ENCODE measurements at regions of chr1 and their contacts with region 1.

Region 1: GRCh38 chr1:103220631-103221041 is 112.3 kb upstream of the COL11A1 start:
- DNase-seq: no peak
- ATAC-seq: no peak
- H3K4me3 ChIP-seq: no peak overlapping the region
- H3K27ac ChIP-seq: no peak overlapping the region
- H3K4me1 ChIP-seq: no peaks in the 10 kb centered on the region
- H3K27me3 ChIP-seq: no peaks in the 10 kb centered on the region
- CTCF ChIP-seq: no peak

Region 2: GRCh38 chr1:103162360-103162759 is 58.3 kb before region 1 on chr1:
- intact Hi-C with region 1: no loop called
- DNase-seq: no peak
- ATAC-seq: no peak
- H3K4me3 ChIP-seq: no peak overlapping the region
- H3K27ac ChIP-seq: no peak overlapping the region
- H3K4me1 ChIP-seq: no peaks in the 10 kb centered on the region
- H3K27me3 ChIP-seq: no peaks in the 10 kb centered on the region
- CTCF ChIP-seq: no peak

Region 3: GRCh38 chr1:103250441-103250861 is 29.8 kb after region 1 on chr1:
- intact Hi-C with region 1: loop called in 1 of 2 experiments (anchors 1 kb)
- DNase-seq: no peak
- ATAC-seq: no peak
- H3K4me3 ChIP-seq: no peak overlapping the region
- H3K27ac ChIP-seq: no peak overlapping the region
- H3K4me1 ChIP-seq: no peaks in the 10 kb centered on the region
- H3K27me3 ChIP-seq: no peaks in the 10 kb centered on the region
- CTCF ChIP-seq: no peak

Region 4: GRCh38 chr1:103327054-103327719 is 106.6 kb after region 1 on chr1:
- intact Hi-C with region 1: no loop called
- DNase-seq: peak in 1 of 2 donors; percentile 5
- ATAC-seq: no peak
- H3K4me3 ChIP-seq: no peak overlapping the region
- H3K27ac ChIP-seq: no peak overlapping the region
- H3K4me1 ChIP-seq: no peaks in the 10 kb centered on the region
- H3K27me3 ChIP-seq: no peaks in the 10 kb centered on the region
- CTCF ChIP-seq: no peak

Region 5: DNA sequence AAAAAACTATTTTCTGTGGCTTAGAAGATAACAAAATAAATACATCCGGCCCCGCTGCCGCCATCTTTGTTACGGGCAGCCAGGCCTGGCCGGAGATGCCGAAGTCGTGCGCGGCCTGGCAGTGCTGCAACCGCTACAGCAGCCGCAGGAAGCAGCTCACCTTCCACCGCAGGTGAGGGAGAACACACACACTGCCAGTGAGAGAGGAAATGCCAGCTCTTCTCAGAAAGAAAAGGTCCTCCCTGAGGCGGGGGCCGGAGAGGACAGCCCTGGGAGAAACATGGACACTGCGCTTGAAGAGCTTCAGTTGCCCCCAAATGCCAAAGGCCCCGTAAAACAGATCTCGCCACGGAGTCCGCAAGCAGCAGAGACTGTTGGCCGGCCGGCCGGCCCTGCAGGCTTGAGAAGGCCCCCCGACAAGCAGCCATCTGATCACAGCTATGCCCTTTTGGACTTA is 852.3 kb after region 1 on chr1:
- intact Hi-C with region 1: no loop called
- DNase-seq: no peak
- ATAC-seq: no peak
- H3K4me3 ChIP-seq: no peak overlapping the region
- H3K27ac ChIP-seq: no peak overlapping the region
- H3K4me1 ChIP-seq: no peaks in the 10 kb centered on the region
- H3K27me3 ChIP-seq: peaks cover 0 to 1% (median 0%) of the 10 kb centered on the region in 3 donors
- CTCF ChIP-seq: no peak